AG04450 (cell line): ENCODE measurements at regions of chr9 and their contacts with region 1.

Region 1: DNA sequence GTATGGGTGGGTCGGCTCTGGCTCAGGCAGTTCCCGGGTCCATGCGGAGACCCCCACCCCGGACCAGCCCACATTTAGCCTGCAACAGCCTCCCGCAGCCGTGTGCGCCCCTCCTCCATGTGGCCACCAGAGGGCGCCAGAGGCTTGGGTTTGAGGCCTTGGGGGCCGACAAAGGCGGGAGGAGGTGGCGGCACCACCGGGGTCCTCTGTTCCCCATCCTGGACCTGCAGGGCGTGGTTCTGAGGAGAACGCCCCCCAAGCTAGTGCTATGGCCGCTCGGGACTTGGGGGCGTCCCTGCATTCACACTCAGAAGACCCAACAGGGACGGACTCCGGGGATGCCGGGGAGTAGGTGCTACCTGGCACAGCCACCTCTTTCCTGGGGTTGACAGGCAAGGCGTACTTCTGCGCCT is 16.5 kb downstream of the ASS1 start:
- DNase-seq: no peak
- H3K4me3 ChIP-seq: no peak overlapping the region
- H3K27ac ChIP-seq: no peak overlapping the region
- H3K27me3 ChIP-seq: peaks cover 9% of the 10 kb centered on the region
- CTCF ChIP-seq: peak; percentile 85

Region 2: DNA sequence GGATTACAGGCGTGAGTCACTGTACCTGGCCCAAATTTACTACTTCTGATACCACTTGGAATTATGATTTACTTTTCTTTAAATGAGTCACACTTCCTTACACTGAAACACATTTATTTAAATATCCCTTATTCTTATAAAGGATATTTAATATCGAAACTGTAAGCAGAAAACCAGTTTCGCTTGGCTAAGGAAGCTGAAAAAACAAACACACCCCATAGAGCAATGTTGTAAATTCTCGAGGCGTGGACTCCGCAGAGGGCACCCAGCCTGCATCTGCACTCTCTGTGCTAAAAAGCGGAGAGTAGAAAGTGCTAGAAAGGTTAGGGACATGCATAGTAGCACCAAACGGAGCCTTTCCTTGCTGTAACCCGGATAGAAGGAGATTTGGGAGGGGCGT is 109.1 kb before region 1 on chr9:
- CTCF ChIA-PET with region 1: no interaction called
- POLR2A ChIA-PET with region 1: interaction called, 11 read pairs
- DNase-seq: no peak
- H3K4me3 ChIP-seq: no peak overlapping the region
- H3K27ac ChIP-seq: no peak overlapping the region
- H3K27me3 ChIP-seq: peaks cover 15% of the 10 kb centered on the region
- CTCF ChIP-seq: no peak

Region 3: GRCh38 chr9:130446111-130446861 is 14.9 kb before region 1 on chr9:
- CTCF ChIA-PET with region 1: interaction called, 21 read pairs
- POLR2A ChIA-PET with region 1: no interaction called
- DNase-seq: peak; percentile 82
- H3K4me3 ChIP-seq: peak overlapping the region; percentile 60
- H3K27ac ChIP-seq: peak overlapping the region; percentile 89
- H3K27me3 ChIP-seq: peaks cover 4% of the 10 kb centered on the region
- CTCF ChIP-seq: no peak

Region 4: GRCh38 chr9:130473566-130473965 is 12.3 kb after region 1 on chr9:
- CTCF ChIA-PET with region 1: interaction called, 15 read pairs
- POLR2A ChIA-PET with region 1: no interaction called
- DNase-seq: no peak
- H3K4me3 ChIP-seq: no peak overlapping the region
- H3K27ac ChIP-seq: no peak overlapping the region
- H3K27me3 ChIP-seq: peaks cover 29% of the 10 kb centered on the region
- CTCF ChIP-seq: no peak

Region 5: GRCh38 chr9:130682490-130683121 is 221.4 kb after region 1 on chr9:
- CTCF ChIA-PET with region 1: interaction called, 188 read pairs
- POLR2A ChIA-PET with region 1: no interaction called
- DNase-seq: no peak
- H3K4me3 ChIP-seq: peak overlapping the region; percentile 36
- H3K27ac ChIP-seq: no peak overlapping the region
- H3K27me3 ChIP-seq: peaks cover 19% of the 10 kb centered on the region
- CTCF ChIP-seq: peak; percentile 86